ENCODE measurements at regions of chr3 and their contacts with region 1.

Region 1: GRCh38 chr3:15332405-15333098 is at the start of gene SH3BP5:
- DNase-seq: peak; percentile 82
- H3K4me3 Mint-ChIP-seq: peak within 1 kb of the TSS; percentile 83
- H3K27ac Mint-ChIP-seq: peak within 1 kb of the TSS; percentile 78
- H3K4me1 Mint-ChIP-seq: peaks cover 54% of the 10 kb centered on the region
- H3K27me3 Mint-ChIP-seq: no peaks in the 10 kb centered on the region
- total RNA-seq, gene SH3BP5: 33.6 to 37.5 TPM

Region 2: DNA sequence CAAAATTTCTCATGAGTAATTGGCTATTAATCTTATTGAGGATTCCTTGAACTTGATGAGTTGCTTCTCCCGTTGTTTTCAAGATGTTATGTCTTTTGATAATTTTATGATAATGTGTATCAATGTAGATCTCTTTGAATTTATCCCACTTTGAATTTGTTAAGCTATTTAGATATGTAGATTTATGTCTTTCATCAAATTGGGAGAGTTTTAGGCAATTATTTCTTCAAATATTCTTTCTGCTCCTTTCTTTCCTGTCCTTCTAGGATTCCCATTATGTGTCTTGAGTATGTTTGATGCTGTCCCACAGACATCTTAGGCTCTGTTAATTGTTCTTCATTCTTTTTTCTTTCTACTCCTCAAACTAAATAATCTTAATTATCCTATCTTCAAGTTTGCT is 581.9 kb before region 1 on chr3:
- CTCF ChIA-PET with region 1: no interaction called
- POLR2A ChIA-PET with region 1: no interaction called
- intact Hi-C with region 1: no loop called
- DNase-seq: no peak
- H3K4me3 Mint-ChIP-seq: no peak overlapping the region
- H3K27ac Mint-ChIP-seq: no peak overlapping the region
- H3K4me1 Mint-ChIP-seq: no peaks in the 10 kb centered on the region
- H3K27me3 Mint-ChIP-seq: peaks cover 5% of the 10 kb centered on the region

Region 3: GRCh38 chr3:15300323-15301078 is 32.1 kb before region 1 on chr3:
- CTCF ChIA-PET with region 1: interaction called, 10 read pairs
- POLR2A ChIA-PET with region 1: interaction called, 7 read pairs
- intact Hi-C with region 1: no loop called
- DNase-seq: peak; percentile 37
- H3K4me3 Mint-ChIP-seq: no peak overlapping the region
- H3K27ac Mint-ChIP-seq: peak overlapping the region; percentile 71
- H3K4me1 Mint-ChIP-seq: peaks cover 81% of the 10 kb centered on the region
- H3K27me3 Mint-ChIP-seq: no peaks in the 10 kb centered on the region

Region 4: GRCh38 chr3:15319575-15319974 is 13.0 kb before region 1 on chr3:
- CTCF ChIA-PET with region 1: interaction called, 31 read pairs
- POLR2A ChIA-PET with region 1: interaction called, 9 read pairs
- intact Hi-C with region 1: no loop called
- DNase-seq: no peak
- H3K4me3 Mint-ChIP-seq: no peak overlapping the region
- H3K27ac Mint-ChIP-seq: peak overlapping the region; percentile 52
- H3K4me1 Mint-ChIP-seq: peaks cover 83% of the 10 kb centered on the region
- H3K27me3 Mint-ChIP-seq: no peaks in the 10 kb centered on the region

Region 5: GRCh38 chr3:15356186-15356585 is 23.6 kb after region 1 on chr3:
- CTCF ChIA-PET with region 1: interaction called, 19 read pairs
- POLR2A ChIA-PET with region 1: interaction called, 15 read pairs
- intact Hi-C with region 1: no loop called
- DNase-seq: no peak
- H3K4me3 Mint-ChIP-seq: peak overlapping the region; percentile 27
- H3K27ac Mint-ChIP-seq: peak overlapping the region; percentile 76
- H3K4me1 Mint-ChIP-seq: peaks cover 42% of the 10 kb centered on the region
- H3K27me3 Mint-ChIP-seq: no peaks in the 10 kb centered on the region

Region 6: GRCh38 chr3:15377961-15378791 is 45.6 kb after region 1 on chr3:
- CTCF ChIA-PET with region 1: interaction called, 11 read pairs
- POLR2A ChIA-PET with region 1: interaction called, 4 read pairs
- intact Hi-C with region 1: loop called (anchors 1 kb)
- DNase-seq: peak; percentile 97
- H3K4me3 Mint-ChIP-seq: peak overlapping the region; percentile 20
- H3K27ac Mint-ChIP-seq: peak overlapping the region; percentile 79
- H3K4me1 Mint-ChIP-seq: peaks cover 18% of the 10 kb centered on the region
- H3K27me3 Mint-ChIP-seq: no peaks in the 10 kb centered on the region

Measured in activated CD4-positive, alpha-beta memory T cell treated with anti-CD3 and anti-CD28 coated beads for 36 hours (primary cell).